AG04449 (cell line): ENCODE measurements at regions of chr11 and their contacts with region 1.

Region 1: DNA sequence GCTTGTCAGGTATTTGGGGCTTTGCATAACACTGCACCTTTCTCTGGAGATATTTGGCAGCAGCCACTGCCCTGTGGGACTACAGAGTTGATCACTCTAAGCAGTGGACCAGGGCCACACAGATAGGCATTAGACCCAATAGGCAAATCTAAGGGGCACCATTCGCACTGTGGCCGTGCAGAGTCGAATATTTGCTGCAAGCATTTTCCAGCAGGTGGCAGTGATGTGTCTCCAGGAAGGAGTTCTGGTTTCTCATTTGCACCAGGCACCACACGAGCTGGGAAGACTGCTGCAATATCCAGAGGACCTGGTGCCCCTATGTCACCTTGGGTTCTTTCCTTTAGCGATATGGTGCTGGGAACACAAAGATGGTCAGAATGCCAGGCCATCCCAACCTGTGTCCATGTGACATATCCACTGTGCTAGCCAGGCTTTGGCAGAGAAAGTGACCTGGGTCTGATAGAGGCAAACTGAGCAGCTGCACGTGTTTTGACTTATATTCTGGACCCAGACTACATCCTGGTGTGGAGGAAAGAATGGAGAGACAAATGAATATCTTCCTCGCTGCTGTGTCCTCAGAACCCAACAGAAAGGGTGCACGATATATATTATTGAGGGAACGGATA is 318.7 kb downstream of the BUD13 start:
- DNase-seq: no peak
- H3K4me3 ChIP-seq: no peak overlapping the region
- CTCF ChIP-seq: peak; percentile 54

Region 2: GRCh38 chr11:116397602-116398084 is 56.5 kb before region 1 on chr11:
- CTCF ChIA-PET with region 1: no interaction called
- POLR2A ChIA-PET with region 1: no interaction called
- DNase-seq: no peak
- H3K4me3 ChIP-seq: no peak overlapping the region
- CTCF ChIP-seq: no peak

Region 3: GRCh38 chr11:116465056-116465455 is 10.9 kb after region 1 on chr11:
- CTCF ChIA-PET with region 1: interaction called, 13 read pairs
- POLR2A ChIA-PET with region 1: no interaction called
- DNase-seq: no peak
- H3K4me3 ChIP-seq: no peak overlapping the region
- CTCF ChIP-seq: no peak

Region 4: GRCh38 chr11:116499396-116500003 is 45.4 kb after region 1 on chr11:
- CTCF ChIA-PET with region 1: interaction called, 32 read pairs
- POLR2A ChIA-PET with region 1: no interaction called
- DNase-seq: no peak
- H3K4me3 ChIP-seq: no peak overlapping the region
- CTCF ChIP-seq: peak; percentile 48

Region 5: DNA sequence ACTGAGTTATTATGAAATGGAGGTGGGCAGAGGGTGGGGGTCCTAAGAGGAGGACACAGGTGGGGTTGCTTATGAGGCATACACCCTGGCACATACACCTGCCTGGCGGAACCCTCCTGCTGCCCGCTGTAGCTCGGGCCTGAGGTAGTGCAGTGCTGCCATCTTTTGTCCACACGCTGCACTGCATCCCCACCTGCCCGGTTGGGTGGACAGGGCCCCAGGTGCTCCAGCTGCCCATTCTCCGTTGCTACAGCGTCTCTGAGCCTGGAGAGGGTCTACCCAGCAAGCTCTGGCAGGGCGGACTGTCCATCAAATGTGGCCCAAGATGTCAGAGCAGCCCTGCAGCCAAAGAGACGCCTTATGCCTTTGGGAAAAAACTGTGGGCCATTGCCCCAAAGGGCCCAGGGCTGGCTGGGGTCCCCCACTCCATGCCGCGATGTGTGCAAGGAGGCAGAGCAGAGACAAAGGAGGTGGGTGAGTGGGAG is 187.5 kb after region 1 on chr11:
- CTCF ChIA-PET with region 1: interaction called, 11 read pairs
- POLR2A ChIA-PET with region 1: no interaction called
- DNase-seq: no peak
- H3K4me3 ChIP-seq: no peak overlapping the region
- CTCF ChIP-seq: peak; percentile 76

Region 6: DNA sequence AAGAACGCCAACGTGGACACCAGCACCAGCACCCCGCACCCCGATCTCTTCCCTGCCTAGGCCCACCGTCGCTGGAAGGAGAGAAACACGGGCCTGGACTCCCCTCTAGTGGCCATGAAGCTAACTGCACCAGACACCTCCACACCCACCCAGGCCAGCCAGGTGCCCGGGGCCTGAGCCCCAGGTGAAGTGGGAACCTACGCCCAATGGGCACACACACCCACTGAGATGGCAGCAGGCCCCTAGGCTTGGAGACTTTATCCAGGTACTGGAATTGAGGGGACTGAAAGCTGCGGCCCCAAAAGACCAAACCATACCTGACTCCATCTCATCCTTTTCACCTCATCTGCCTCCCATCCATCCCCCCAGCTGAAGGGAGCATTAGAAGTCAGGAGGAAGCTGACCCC is 237.6 kb after region 1 on chr11:
- CTCF ChIA-PET with region 1: interaction called, 43 read pairs
- POLR2A ChIA-PET with region 1: no interaction called
- DNase-seq: no peak
- H3K4me3 ChIP-seq: no peak overlapping the region
- CTCF ChIP-seq: peak; percentile 89